B cell (primary cell): ENCODE measurements at regions of chr1 and their contacts with region 1.

Region 1: DNA sequence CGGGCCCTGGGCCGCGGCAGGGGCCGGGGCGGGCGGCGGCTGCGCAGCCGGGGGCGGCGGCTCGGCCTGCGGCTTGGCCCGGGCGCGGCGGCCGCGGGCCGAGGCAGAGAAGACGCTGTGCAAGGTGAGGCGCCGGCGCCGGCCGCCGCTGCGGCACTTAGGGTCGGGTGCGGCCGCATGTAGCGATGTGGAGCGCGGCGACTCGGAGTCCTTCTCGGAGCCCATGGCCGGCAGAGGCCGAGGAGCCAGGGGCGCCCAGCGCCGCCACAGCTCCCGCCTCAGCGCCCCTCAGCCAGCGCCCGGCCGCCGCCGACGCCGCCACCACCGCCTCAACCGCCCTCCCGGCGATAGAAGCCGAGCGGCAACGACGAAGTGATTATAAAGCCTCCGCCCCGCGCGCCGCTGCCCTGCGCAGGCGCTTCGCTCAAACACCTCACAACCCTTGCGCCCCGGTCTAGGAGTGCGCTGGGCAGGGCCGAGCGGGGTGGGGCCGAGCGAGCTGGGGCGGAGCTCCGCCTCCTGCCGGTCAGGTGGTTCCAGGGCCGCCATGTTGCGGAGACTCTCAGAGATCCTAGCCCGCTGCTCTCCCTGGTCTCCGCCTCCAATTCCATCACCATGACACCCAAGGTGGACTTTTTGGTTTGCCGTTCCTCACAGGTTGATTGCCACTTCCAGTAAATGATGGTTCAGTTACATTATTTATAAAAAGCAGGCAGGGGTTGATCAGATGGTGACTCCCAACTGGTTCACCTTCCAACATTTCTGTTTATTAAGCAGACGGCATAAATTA is at the start of gene RNF19B:
- DNase-seq: peak; percentile 97
- ATAC-seq: peak; percentile 90
- H3K4me3 ChIP-seq: peak within 1 kb of the TSS; percentile 51 to 94 (median 68)
- H3K4me3 Mint-ChIP-seq: peak within 1 kb of the TSS; percentile 91
- H3K27ac ChIP-seq: peak within 1 kb of the TSS; percentile 76 to 84
- H3K27ac Mint-ChIP-seq: peak within 1 kb of the TSS; percentile 93
- H3K4me1 ChIP-seq: peaks cover 30 to 35% of the 10 kb centered on the region in 2 donors
- H3K4me1 Mint-ChIP-seq: peaks cover 36% of the 10 kb centered on the region
- H3K27me3 ChIP-seq: no peaks in the 10 kb centered on the region
- H3K27me3 Mint-ChIP-seq: no peaks in the 10 kb centered on the region
- CTCF ChIP-seq: no peak
- total RNA-seq, gene RNF19B: 38.4 and 40.3 TPM in 2 replicates

Region 2: DNA sequence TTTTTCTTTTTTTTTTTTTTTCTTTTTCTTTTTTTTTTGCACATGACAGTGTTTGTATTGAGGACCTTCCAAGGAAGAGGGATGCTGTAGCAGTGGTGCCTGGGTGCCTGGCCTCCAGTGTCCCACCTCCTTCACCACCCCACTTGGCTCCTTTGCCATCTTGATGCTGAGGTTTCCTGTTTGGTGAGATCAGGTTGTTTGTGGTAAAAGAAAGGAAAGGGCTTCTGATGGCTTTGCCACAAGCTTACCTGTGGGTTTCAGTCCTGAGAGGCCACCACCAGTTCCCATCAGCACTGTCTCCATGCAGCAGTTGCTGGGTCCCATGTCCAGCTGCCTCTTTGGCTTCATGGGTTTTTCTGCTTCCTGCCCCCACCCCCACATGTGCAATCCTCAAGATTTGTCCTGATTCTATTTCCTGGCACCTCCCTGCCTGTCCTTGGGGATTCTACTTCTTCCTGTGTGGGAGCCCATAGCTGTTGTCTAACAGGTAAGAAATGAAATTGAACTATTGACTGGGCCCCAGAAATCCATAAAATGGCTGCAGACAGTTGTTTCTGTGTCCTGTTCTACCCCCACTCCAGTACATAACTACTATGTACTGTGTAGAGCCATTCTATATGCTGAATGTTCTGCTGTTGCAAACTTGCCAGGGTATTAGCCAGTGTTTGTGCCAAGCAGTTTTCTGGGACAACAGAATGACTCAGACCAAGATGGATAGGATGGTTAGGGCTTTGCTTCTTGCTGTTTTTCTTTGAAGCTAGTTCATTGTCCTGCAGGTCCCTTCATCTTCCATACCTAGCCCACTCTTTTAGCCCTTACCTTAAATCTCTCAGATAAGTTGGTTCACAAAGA is 768.5 kb before region 1 on chr1:
- CTCF ChIA-PET with region 1: no interaction called
- POLR2A ChIA-PET with region 1: no interaction called
- intact Hi-C with region 1: no loop called
- DNase-seq: no peak
- ATAC-seq: no peak
- H3K4me3 ChIP-seq: no peak overlapping the region
- H3K4me3 Mint-ChIP-seq: no peak overlapping the region
- H3K27ac ChIP-seq: no peak overlapping the region
- H3K27ac Mint-ChIP-seq: peak overlapping the region; percentile 24
- H3K4me1 ChIP-seq: peaks cover 0 to 18% of the 10 kb centered on the region in 2 donors
- H3K4me1 Mint-ChIP-seq: peaks cover 9% of the 10 kb centered on the region
- H3K27me3 ChIP-seq: no peaks in the 10 kb centered on the region
- H3K27me3 Mint-ChIP-seq: no peaks in the 10 kb centered on the region
- CTCF ChIP-seq: no peak

Region 3: GRCh38 chr1:32650752-32651460 is 313.8 kb before region 1 on chr1 and contains the start of gene RBBP4:
- CTCF ChIA-PET with region 1: no interaction called
- POLR2A ChIA-PET with region 1: no interaction called
- intact Hi-C with region 1: loop called (anchors 5 kb)
- DNase-seq: peak; percentile 99
- ATAC-seq: peak; percentile 83
- H3K4me3 ChIP-seq: peak within 1 kb of the TSS; percentile 77 to 96 (median 81)
- H3K4me3 Mint-ChIP-seq: peak within 1 kb of the TSS; percentile 98
- H3K27ac ChIP-seq: peak within 1 kb of the TSS; percentile 97 to 100
- H3K27ac Mint-ChIP-seq: peak within 1 kb of the TSS; percentile 100
- H3K4me1 ChIP-seq: peaks cover 21 to 31% of the 10 kb centered on the region in 2 donors
- H3K4me1 Mint-ChIP-seq: peaks cover 55% of the 10 kb centered on the region
- H3K27me3 ChIP-seq: no peaks in the 10 kb centered on the region
- H3K27me3 Mint-ChIP-seq: no peaks in the 10 kb centered on the region
- CTCF ChIP-seq: no peak
- total RNA-seq, gene RBBP4: 192 and 204 TPM in 2 replicates

Region 4: DNA sequence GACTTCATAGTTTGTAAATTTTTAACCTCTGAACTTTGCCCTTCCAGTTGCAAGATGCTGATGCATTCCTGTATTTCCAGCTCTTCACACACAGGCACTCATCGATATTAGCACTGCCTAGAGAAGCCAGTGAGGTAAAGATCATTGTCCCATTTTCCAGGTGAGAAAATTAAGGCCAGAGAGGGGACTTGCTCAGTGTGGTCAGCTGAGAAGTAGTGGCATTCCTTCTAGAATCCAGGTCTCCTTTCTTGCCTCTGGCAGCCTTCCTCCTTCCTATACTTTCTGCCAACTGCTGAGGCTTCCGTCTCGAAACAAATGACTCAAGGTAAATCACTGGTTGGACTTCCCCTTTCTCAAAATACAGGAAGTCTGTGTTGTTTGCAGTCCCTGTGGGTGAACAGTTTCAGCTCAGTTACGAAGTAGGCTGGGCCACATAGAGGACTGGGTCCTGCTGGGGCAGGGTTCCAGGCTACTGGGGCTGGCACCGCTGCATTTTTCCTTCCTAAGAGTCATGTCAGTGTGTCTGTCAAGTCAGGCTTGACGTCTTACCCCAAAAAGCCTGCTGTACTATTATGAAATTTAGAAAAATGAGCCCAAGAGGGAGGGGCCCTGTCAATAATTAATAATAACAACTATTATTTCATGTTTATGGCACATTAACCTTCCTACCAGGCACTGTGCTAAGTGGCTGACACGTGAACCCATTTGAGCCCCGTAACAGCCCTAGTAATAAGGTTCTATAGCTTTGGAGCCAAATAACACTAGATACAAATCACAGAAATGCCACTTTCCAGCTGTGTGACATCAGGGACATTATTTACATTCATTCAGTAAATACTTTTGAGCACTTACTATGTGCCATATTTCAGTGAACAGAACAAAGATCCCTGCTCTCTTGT is 16.6 kb after region 1 on chr1:
- CTCF ChIA-PET with region 1: interaction called, 13 read pairs
- POLR2A ChIA-PET with region 1: interaction called, 20 read pairs
- intact Hi-C with region 1: loop called (anchors 1 kb)
- DNase-seq: peak; percentile 88
- ATAC-seq: peak; percentile 96
- H3K4me3 ChIP-seq: peak overlapping the region in 4 of 5 experiments; percentile 6 to 44 (median 38)
- H3K4me3 Mint-ChIP-seq: peak overlapping the region; percentile 74
- H3K27ac ChIP-seq: peak overlapping the region; percentile 70 to 87
- H3K27ac Mint-ChIP-seq: peak overlapping the region; percentile 84
- H3K4me1 ChIP-seq: peaks cover 34 to 44% of the 10 kb centered on the region in 2 donors
- H3K4me1 Mint-ChIP-seq: peaks cover 43% of the 10 kb centered on the region
- H3K27me3 ChIP-seq: no peaks in the 10 kb centered on the region
- H3K27me3 Mint-ChIP-seq: no peaks in the 10 kb centered on the region
- CTCF ChIP-seq: no peak

Region 5: GRCh38 chr1:32992489-32993323 is 28.1 kb after region 1 on chr1:
- CTCF ChIA-PET with region 1: interaction called, 3 read pairs
- POLR2A ChIA-PET with region 1: interaction called, 34 read pairs
- intact Hi-C with region 1: loop called (anchors 1 kb)
- DNase-seq: peak; percentile 87
- ATAC-seq: peak; percentile 94
- H3K4me3 ChIP-seq: peak overlapping the region in 3 of 5 experiments; percentile 10 to 48 (median 12)
- H3K4me3 Mint-ChIP-seq: peak overlapping the region; percentile 74
- H3K27ac ChIP-seq: peak overlapping the region; percentile 63 to 88
- H3K27ac Mint-ChIP-seq: peak overlapping the region; percentile 98
- H3K4me1 ChIP-seq: peaks cover 53 to 54% of the 10 kb centered on the region in 2 donors
- H3K4me1 Mint-ChIP-seq: peaks cover 63% of the 10 kb centered on the region
- H3K27me3 ChIP-seq: no peaks in the 10 kb centered on the region
- H3K27me3 Mint-ChIP-seq: no peaks in the 10 kb centered on the region
- CTCF ChIP-seq: no peak

Region 6: DNA sequence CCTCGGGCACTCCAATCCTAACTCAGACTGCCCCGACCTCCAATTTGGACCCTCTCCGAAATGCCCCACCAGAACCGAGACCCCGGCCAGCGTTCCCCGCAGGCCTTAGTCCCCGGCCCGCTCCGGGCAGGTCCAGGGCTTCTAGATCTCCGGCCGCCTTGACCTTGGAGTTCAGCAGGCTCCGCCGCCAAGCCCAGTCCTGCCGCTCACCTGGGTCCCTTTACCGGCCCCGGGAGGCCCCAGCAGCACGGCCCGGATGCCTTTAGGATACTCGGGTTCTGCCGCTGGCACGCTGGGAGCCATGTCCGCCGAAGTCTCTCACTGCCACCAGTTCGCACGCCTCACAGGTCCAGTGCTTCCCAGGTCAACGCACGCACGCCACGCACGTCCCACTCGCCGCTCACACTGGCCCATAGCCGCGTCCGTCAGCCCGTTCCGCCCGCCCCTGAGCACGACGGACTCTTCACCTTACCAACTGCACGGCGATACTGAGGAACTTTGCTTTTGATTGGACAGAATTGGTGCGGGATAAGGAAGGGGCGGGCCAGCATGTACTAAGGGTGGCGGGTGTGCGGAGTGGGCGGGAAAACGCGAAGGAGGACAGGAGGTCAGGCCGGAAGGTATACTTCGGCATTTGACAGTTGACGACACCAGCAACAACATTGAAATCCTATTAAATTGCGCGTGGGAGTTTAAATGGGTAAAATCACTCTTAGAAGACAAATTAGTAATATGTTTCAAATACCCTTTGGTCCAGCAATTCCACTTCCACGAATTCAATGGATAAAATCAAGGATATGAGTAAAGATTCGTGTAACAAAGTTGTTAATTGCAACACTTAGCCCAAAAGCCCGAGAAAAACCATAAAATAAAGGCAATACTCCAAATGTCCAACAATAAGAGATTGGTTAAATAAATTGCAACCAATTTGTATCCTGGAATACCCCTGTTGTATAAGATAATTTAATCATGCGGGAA is 72.2 kb after region 1 on chr1 and contains the start of gene AK2:
- CTCF ChIA-PET with region 1: no interaction called
- POLR2A ChIA-PET with region 1: no interaction called
- intact Hi-C with region 1: loop called (anchors 1 kb)
- DNase-seq: peak; percentile 94
- ATAC-seq: peak; percentile 99
- H3K4me3 ChIP-seq: peak within 1 kb of the TSS; percentile 72 to 99 (median 77)
- H3K4me3 Mint-ChIP-seq: peak within 1 kb of the TSS; percentile 97
- H3K27ac ChIP-seq: peak within 1 kb of the TSS; percentile 42 to 78
- H3K27ac Mint-ChIP-seq: peak within 1 kb of the TSS; percentile 91
- H3K4me1 ChIP-seq: peaks cover 16 to 24% of the 10 kb centered on the region in 2 donors
- H3K4me1 Mint-ChIP-seq: peaks cover 45% of the 10 kb centered on the region
- H3K27me3 ChIP-seq: no peaks in the 10 kb centered on the region
- H3K27me3 Mint-ChIP-seq: no peaks in the 10 kb centered on the region
- CTCF ChIP-seq: no peak
- total RNA-seq, gene AK2: 104 and 109 TPM in 2 replicates

Region 7: GRCh38 chr1:33080885-33081553 is 116.4 kb after region 1 on chr1 and contains the start of gene AZIN2:
- CTCF ChIA-PET with region 1: no interaction called
- POLR2A ChIA-PET with region 1: no interaction called
- intact Hi-C with region 1: loop called (anchors 1 kb)
- DNase-seq: peak; percentile 94
- ATAC-seq: peak; percentile 99
- H3K4me3 ChIP-seq: peak within 1 kb of the TSS; percentile 50 to 73 (median 63)
- H3K4me3 Mint-ChIP-seq: peak within 1 kb of the TSS; percentile 85
- H3K27ac ChIP-seq: no peak within 1 kb of the TSS
- H3K27ac Mint-ChIP-seq: peak within 1 kb of the TSS; percentile 47
- H3K4me1 ChIP-seq: peaks cover 14 to 19% of the 10 kb centered on the region in 2 donors
- H3K4me1 Mint-ChIP-seq: peaks cover 21% of the 10 kb centered on the region
- H3K27me3 ChIP-seq: peaks cover 0 to 12% (median 4%) of the 10 kb centered on the region in 4 experiments
- H3K27me3 Mint-ChIP-seq: peaks cover 7% of the 10 kb centered on the region
- CTCF ChIP-seq: no peak
- total RNA-seq, gene AZIN2: 5.4 and 5.9 TPM in 2 replicates

Region 8: GRCh38 chr1:33127001-33127791 is 162.5 kb after region 1 on chr1:
- CTCF ChIA-PET with region 1: no interaction called
- POLR2A ChIA-PET with region 1: no interaction called
- intact Hi-C with region 1: loop called (anchors 2 kb)
- DNase-seq: peak; percentile 99
- ATAC-seq: peak; percentile 97
- H3K4me3 ChIP-seq: peak overlapping the region; percentile 80 to 96 (median 88)
- H3K4me3 Mint-ChIP-seq: peak overlapping the region; percentile 93
- H3K27ac ChIP-seq: peak overlapping the region; percentile 82 to 83
- H3K27ac Mint-ChIP-seq: peak overlapping the region; percentile 95
- H3K4me1 ChIP-seq: peaks cover 13 to 25% of the 10 kb centered on the region in 2 donors
- H3K4me1 Mint-ChIP-seq: peaks cover 18% of the 10 kb centered on the region
- H3K27me3 ChIP-seq: no peaks in the 10 kb centered on the region
- H3K27me3 Mint-ChIP-seq: peaks cover 5% of the 10 kb centered on the region
- CTCF ChIP-seq: peak; percentile 86

Region 9: GRCh38 chr1:34612091-34612827 is 1647.6 kb after region 1 on chr1:
- CTCF ChIA-PET with region 1: no interaction called
- POLR2A ChIA-PET with region 1: no interaction called
- intact Hi-C with region 1: no loop called
- DNase-seq: no peak
- ATAC-seq: no peak
- H3K4me3 ChIP-seq: no peak overlapping the region
- H3K4me3 Mint-ChIP-seq: no peak overlapping the region
- H3K27ac ChIP-seq: no peak overlapping the region
- H3K27ac Mint-ChIP-seq: no peak overlapping the region
- H3K4me1 ChIP-seq: no peaks in the 10 kb centered on the region
- H3K4me1 Mint-ChIP-seq: no peaks in the 10 kb centered on the region
- H3K27me3 ChIP-seq: peaks cover 0 to 6% (median 1%) of the 10 kb centered on the region in 4 experiments
- H3K27me3 Mint-ChIP-seq: peaks cover 31% of the 10 kb centered on the region
- CTCF ChIP-seq: no peak